ENCODE measurements at regions of chr1 and their contacts with region 1.

Region 1: GRCh38 chr1:95043141-95043980 is 29.4 kb downstream of the ALG14 start:
- DNase-seq: peak; percentile 60
- ATAC-seq: peak; percentile 95
- H3K4me3 ChIP-seq: no peak overlapping the region
- H3K27ac ChIP-seq: no peak overlapping the region
- H3K4me1 ChIP-seq: no peaks in the 10 kb centered on the region
- H3K27me3 ChIP-seq: no peaks in the 10 kb centered on the region
- CTCF ChIP-seq: peak; percentile 91

Region 2: DNA sequence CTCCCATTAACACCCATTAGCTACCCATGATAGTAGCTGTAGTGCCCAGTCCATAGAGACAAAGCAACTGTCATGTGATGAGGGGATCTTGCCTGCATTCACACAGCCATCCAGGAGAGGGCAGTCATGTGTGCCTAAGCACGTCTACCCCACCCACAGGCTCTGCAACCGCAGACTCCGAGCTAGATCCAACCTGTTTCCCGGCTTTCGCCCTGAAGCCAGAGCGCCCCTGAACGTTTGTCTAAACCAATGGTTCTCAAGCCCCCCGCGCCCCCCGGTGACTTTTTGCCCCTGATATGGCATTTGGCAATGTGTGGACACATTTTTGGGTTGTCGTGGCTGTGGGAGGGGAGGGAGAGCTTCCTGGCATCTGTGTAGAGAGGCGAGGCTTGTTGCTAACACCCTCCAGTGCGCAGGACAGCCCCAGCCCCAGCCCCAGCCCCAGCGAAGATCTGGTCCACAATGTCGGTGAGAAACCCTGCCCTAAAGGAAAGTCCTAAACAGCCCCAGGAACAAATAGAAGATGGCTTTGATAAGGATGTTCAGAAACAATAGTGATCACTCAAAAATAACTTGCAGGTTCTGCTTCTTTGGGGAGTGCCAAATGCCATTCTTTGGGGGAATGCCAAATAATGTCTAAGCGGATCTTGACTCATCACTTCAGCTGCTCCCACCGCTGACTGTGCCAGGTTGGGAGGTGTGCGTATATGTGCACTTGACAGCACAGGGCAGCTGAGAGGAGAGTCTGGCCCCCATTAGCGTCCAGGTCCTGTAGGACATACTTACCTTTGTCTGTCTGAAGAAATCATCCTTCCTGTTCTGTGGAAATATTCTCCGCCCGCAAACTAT is 188.7 kb before region 1 on chr1:
- CTCF ChIA-PET with region 1: interaction called, 40 read pairs
- POLR2A ChIA-PET with region 1: no interaction called
- in situ Hi-C with region 1: no loop called
- intact Hi-C with region 1: loop called (anchors 2 kb)
- DNase-seq: peak; percentile 70
- ATAC-seq: peak; percentile 98
- H3K4me3 ChIP-seq: peak overlapping the region; percentile 38 to 61
- H3K27ac ChIP-seq: no peak overlapping the region
- H3K4me1 ChIP-seq: no peaks in the 10 kb centered on the region
- H3K27me3 ChIP-seq: no peaks in the 10 kb centered on the region
- CTCF ChIP-seq: peak; percentile 83

Region 3: DNA sequence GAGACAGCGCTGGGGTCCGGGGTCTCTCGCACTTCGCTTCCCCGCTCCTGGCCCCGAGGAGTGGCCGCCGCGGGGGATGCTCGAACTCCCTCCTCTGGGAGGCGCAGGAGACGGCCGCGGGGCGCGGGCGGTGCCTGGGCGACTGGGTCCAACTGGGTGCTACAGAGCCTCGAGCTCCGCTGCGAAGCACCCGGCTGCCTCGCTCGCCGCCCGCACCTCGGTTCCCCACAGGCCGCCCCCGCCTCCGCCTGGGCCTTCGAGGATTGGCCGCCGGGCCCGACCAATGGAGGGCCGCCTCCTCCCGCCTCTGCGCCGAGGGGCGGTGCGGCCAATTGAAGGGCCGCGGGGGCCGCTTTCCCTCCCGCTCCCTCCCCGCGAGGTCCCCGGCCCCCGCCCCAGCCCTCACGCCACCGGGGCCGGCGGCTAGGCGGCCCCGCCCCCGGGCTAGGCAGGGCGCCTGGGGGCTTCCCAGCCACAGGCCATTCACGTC is 116.4 kb before region 1 on chr1 and contains the start of gene CNN3:
- CTCF ChIA-PET with region 1: interaction called, 7 read pairs
- POLR2A ChIA-PET with region 1: no interaction called
- in situ Hi-C with region 1: no loop called
- intact Hi-C with region 1: loop called (anchors 5 kb)
- DNase-seq: no peak
- ATAC-seq: peak; percentile 94
- H3K4me3 ChIP-seq: peak within 1 kb of the TSS; percentile 75
- H3K27ac ChIP-seq: peak within 1 kb of the TSS; percentile 88
- H3K4me1 ChIP-seq: peaks cover 18% of the 10 kb centered on the region
- H3K27me3 ChIP-seq: no peaks in the 10 kb centered on the region
- CTCF ChIP-seq: no peak
- total RNA-seq, gene CNN3: 72.3 TPM

Region 4: GRCh38 chr1:94936861-94937620 is 106.3 kb before region 1 on chr1:
- CTCF ChIA-PET with region 1: no interaction called
- POLR2A ChIA-PET with region 1: interaction called, 11 read pairs
- in situ Hi-C with region 1: no loop called
- intact Hi-C with region 1: no loop called
- DNase-seq: no peak
- ATAC-seq: no peak
- H3K4me3 ChIP-seq: no peak overlapping the region
- H3K27ac ChIP-seq: no peak overlapping the region
- H3K4me1 ChIP-seq: no peaks in the 10 kb centered on the region
- H3K27me3 ChIP-seq: no peaks in the 10 kb centered on the region
- CTCF ChIP-seq: no peak

Region 5: DNA sequence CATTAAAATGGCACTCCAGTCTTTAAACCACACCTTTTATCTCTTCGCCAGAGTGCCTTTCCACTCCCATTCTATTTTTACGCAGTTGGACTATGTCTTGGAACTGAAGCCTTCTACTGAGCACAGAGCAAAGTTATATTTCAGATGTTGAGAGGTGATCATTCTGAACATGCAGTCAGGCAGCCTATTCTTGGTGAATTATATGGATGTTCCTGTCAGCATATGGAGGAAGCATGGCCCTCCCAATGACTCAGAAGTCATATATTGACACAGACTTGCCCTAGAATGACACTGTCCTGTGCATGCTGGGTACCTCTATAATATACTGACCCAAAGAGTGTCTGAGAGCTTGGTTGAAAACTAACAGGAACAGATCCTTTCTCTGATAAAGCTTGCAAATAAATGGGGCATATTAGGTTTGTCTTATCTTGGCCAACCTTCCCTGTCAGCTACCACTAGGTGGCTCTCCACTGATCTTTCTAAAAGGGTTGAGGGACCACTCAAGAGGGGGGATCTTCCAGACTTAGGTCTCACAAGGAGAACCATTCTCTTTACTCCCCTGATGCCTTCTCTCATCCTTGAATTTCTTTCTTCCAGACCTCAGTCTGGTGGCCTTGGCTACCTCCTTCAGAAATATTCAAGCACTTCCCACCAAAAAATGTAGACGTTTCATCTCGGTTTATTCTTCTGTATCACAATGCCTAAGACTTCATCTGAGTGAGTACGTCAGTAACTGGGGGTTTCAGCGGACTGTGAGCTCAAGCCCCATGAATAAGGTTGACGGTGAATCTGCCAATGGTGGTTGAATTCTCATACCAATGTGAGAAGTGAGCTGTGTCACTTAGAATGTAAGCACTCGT is 41.2 kb after region 1 on chr1:
- CTCF ChIA-PET with region 1: no interaction called
- POLR2A ChIA-PET with region 1: no interaction called
- in situ Hi-C with region 1: no loop called
- intact Hi-C with region 1: no loop called
- DNase-seq: no peak
- ATAC-seq: no peak
- H3K4me3 ChIP-seq: no peak overlapping the region
- H3K27ac ChIP-seq: no peak overlapping the region
- H3K4me1 ChIP-seq: no peaks in the 10 kb centered on the region
- H3K27me3 ChIP-seq: peaks cover 2% of the 10 kb centered on the region; the same call in 1 of the 2 replicates
- CTCF ChIP-seq: peak; percentile 65

Measured in Panc1 (cell line).